Mammary epithelial cell (primary cell): ENCODE measurements at regions of chr19 and their contacts with region 1.

Region 1: GRCh38 chr19:8526345-8527067 is 12.5 kb upstream of the ZNF414 start:
- DNase-seq: peak; percentile 81
- H3K4me3 ChIP-seq: peak overlapping the region; percentile 53 to 90 (median 63)
- H3K27ac ChIP-seq: no peak overlapping the region
- H3K4me1 ChIP-seq: peaks cover 5% of the 10 kb centered on the region
- H3K27me3 ChIP-seq: no peaks in the 10 kb centered on the region
- CTCF ChIP-seq: no peak

Region 2: GRCh38 chr19:8444645-8445487 is 81.6 kb before region 1 on chr19 and contains the start of gene HNRNPM:
- CTCF ChIA-PET with region 1: no interaction called
- dilution Hi-C with region 1: loop called (anchors 10 kb)
- in situ Hi-C with region 1: no loop called
- intact Hi-C with region 1: no loop called
- DNase-seq: peak; percentile 98
- H3K4me3 ChIP-seq: peak within 1 kb of the TSS; percentile 92 to 96 (median 95)
- H3K27ac ChIP-seq: peak within 1 kb of the TSS; percentile 82
- H3K4me1 ChIP-seq: peaks cover 8% of the 10 kb centered on the region
- H3K27me3 ChIP-seq: no peaks in the 10 kb centered on the region
- CTCF ChIP-seq: no peak
- total RNA-seq, gene HNRNPM: 29.2 to 164 TPM

Region 3: GRCh38 chr19:8487137-8487851 is 39.2 kb before region 1 on chr19:
- CTCF ChIA-PET with region 1: no interaction called
- dilution Hi-C with region 1: loop called (anchors 5 kb)
- in situ Hi-C with region 1: no loop called
- intact Hi-C with region 1: no loop called
- DNase-seq: no peak
- H3K4me3 ChIP-seq: no peak overlapping the region
- H3K27ac ChIP-seq: no peak overlapping the region
- H3K4me1 ChIP-seq: peaks cover 20% of the 10 kb centered on the region
- H3K27me3 ChIP-seq: no peaks in the 10 kb centered on the region
- CTCF ChIP-seq: no peak

Region 4: DNA sequence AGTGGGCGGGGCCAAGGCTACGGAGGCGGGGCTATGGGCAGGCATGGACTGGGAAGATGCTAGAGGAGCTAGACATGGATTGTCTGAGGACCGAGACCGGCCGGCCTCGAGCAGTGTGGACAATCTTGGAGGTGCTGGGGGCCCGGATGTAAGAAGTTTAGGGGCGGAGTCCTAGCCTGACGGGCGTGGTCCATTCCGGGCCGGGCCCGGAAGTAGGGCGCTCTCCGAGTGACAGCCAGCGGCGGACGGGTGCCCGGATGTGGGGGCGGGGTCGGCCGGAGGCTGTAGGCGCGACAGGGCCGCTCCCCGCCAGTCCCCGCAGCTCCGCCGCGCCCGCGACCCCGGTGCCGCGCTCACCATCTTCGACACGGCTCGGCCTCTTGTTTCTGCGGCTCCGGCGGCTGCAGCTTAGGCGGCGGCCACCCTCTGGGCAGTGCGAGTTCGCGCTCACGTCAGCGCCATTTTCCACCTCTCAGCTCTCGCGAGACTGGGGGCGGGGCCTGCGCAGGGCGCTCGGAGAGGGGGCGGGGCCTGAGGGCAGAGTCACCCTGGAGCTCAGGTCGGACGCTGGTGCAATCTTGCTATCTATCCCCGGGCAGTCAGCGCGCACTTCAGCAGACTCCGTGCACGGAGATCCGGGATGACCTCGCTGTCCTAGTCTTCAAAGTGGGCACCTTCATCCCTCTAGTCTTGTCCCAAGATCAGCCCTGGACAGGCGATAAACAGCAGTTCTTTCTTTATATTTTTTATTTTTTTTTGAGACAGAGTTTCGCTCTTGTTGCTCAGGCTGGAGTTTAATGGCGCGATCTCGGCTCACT is 12.6 kb before region 1 on chr19 and contains the start of gene ZNF414:
- CTCF ChIA-PET with region 1: no interaction called
- dilution Hi-C with region 1: no loop called
- in situ Hi-C with region 1: no loop called
- intact Hi-C with region 1: loop called (anchors 1 kb)
- DNase-seq: peak; percentile 97
- H3K4me3 ChIP-seq: peak within 1 kb of the TSS; percentile 62 to 88 (median 71)
- H3K27ac ChIP-seq: peak within 1 kb of the TSS; percentile 84
- H3K4me1 ChIP-seq: peaks cover 12% of the 10 kb centered on the region
- H3K27me3 ChIP-seq: no peaks in the 10 kb centered on the region
- CTCF ChIP-seq: no peak
- total RNA-seq, gene ZNF414: 3.5 to 23.2 TPM

Region 5: GRCh38 chr19:8592231-8593009 is 65.9 kb after region 1 on chr19:
- CTCF ChIA-PET with region 1: no interaction called
- dilution Hi-C with region 1: loop called (anchors 5 kb)
- in situ Hi-C with region 1: no loop called
- intact Hi-C with region 1: no loop called
- DNase-seq: peak; percentile 25
- H3K4me3 ChIP-seq: no peak overlapping the region
- H3K27ac ChIP-seq: no peak overlapping the region
- H3K4me1 ChIP-seq: no peaks in the 10 kb centered on the region
- H3K27me3 ChIP-seq: no peaks in the 10 kb centered on the region
- CTCF ChIP-seq: no peak